CD4-positive, alpha-beta memory T cell (primary cell): ENCODE measurements at regions of chr5 and their contacts with region 1.

Region 1: GRCh38 chr5:160119142-160119904 is at the start of gene PWWP2A:
- DNase-seq: peak; percentile 97 to 100 (median 99)
- H3K4me3 ChIP-seq: peak within 1 kb of the TSS; percentile 69 to 82
- H3K4me3 Mint-ChIP-seq: peak within 1 kb of the TSS; percentile 89 to 98 (median 92)
- H3K27ac ChIP-seq: peak within 1 kb of the TSS; percentile 87
- H3K27ac Mint-ChIP-seq: peak within 1 kb of the TSS; percentile 86 to 98 (median 91)
- H3K4me1 ChIP-seq: peaks cover 14% of the 10 kb centered on the region
- H3K4me1 Mint-ChIP-seq: peaks cover 12 to 23% (median 16%) of the 10 kb centered on the region in 4 donors
- H3K27me3 ChIP-seq: no peaks in the 10 kb centered on the region
- H3K27me3 Mint-ChIP-seq: peaks cover 0 to 4% of the 10 kb centered on the region in 2 donors
- total RNA-seq, gene PWWP2A: 38.7 to 40.6 TPM

Region 2: GRCh38 chr5:159262859-159263567 is 856.3 kb before region 1 on chr5 and contains the start of gene UBLCP1:
- CTCF ChIA-PET with region 1: no interaction called
- POLR2A ChIA-PET with region 1: no interaction called
- intact Hi-C with region 1: loop called (anchors 5 kb)
- DNase-seq: peak; percentile 82 to 87 (median 86)
- H3K4me3 ChIP-seq: peak within 1 kb of the TSS; percentile 67 to 75
- H3K4me3 Mint-ChIP-seq: peak within 1 kb of the TSS; percentile 98 to 99 (median 98)
- H3K27ac ChIP-seq: peak within 1 kb of the TSS; percentile 89
- H3K27ac Mint-ChIP-seq: peak within 1 kb of the TSS; percentile 96 to 100 (median 99)
- H3K4me1 ChIP-seq: peaks cover 27% of the 10 kb centered on the region
- H3K4me1 Mint-ChIP-seq: peaks cover 34 to 66% (median 46%) of the 10 kb centered on the region in 4 donors
- H3K27me3 ChIP-seq: no peaks in the 10 kb centered on the region
- H3K27me3 Mint-ChIP-seq: no peaks in the 10 kb centered on the region
- total RNA-seq, gene UBLCP1: 31.6 to 33.4 TPM

Region 3: GRCh38 chr5:159341914-159342313 is 777.4 kb before region 1 on chr5:
- CTCF ChIA-PET with region 1: no interaction called
- POLR2A ChIA-PET with region 1: interaction called, 3 read pairs
- intact Hi-C with region 1: loop called (anchors 5 kb)
- DNase-seq: peak; percentile 74 to 92 (median 79)
- H3K4me3 ChIP-seq: no peak overlapping the region
- H3K4me3 Mint-ChIP-seq: peak overlapping the region in 7 of 8 donors; percentile 28 to 88 (median 47)
- H3K27ac ChIP-seq: no peak overlapping the region
- H3K27ac Mint-ChIP-seq: peak overlapping the region; percentile 79 to 98 (median 87)
- H3K4me1 ChIP-seq: peaks cover 66% of the 10 kb centered on the region
- H3K4me1 Mint-ChIP-seq: peaks cover 54 to 89% (median 67%) of the 10 kb centered on the region in 4 donors
- H3K27me3 ChIP-seq: no peaks in the 10 kb centered on the region
- H3K27me3 Mint-ChIP-seq: no peaks in the 10 kb centered on the region

Region 4: GRCh38 chr5:160008877-160009590 is 110.3 kb before region 1 on chr5 and contains the start of gene TTC1:
- CTCF ChIA-PET with region 1: interaction called, 3 read pairs
- POLR2A ChIA-PET with region 1: interaction called, 8 read pairs
- intact Hi-C with region 1: loop called (anchors 1 kb)
- DNase-seq: peak; percentile 89 to 96 (median 94)
- H3K4me3 ChIP-seq: peak within 1 kb of the TSS; percentile 85 to 96
- H3K4me3 Mint-ChIP-seq: peak within 1 kb of the TSS; percentile 94 to 100 (median 96)
- H3K27ac ChIP-seq: peak within 1 kb of the TSS; percentile 76
- H3K27ac Mint-ChIP-seq: peak within 1 kb of the TSS; percentile 88 to 99 (median 98)
- H3K4me1 ChIP-seq: peaks cover 30% of the 10 kb centered on the region
- H3K4me1 Mint-ChIP-seq: peaks cover 24 to 35% (median 29%) of the 10 kb centered on the region in 4 donors
- H3K27me3 ChIP-seq: no peaks in the 10 kb centered on the region
- H3K27me3 Mint-ChIP-seq: no peaks in the 10 kb centered on the region
- total RNA-seq, gene TTC1: 47.5 to 47.9 TPM

Region 5: GRCh38 chr5:160064995-160065630 is 54.2 kb before region 1 on chr5:
- CTCF ChIA-PET with region 1: no interaction called
- POLR2A ChIA-PET with region 1: no interaction called
- intact Hi-C with region 1: no loop called
- DNase-seq: no peak
- H3K4me3 ChIP-seq: no peak overlapping the region
- H3K4me3 Mint-ChIP-seq: no peak overlapping the region
- H3K27ac ChIP-seq: no peak overlapping the region
- H3K27ac Mint-ChIP-seq: peak overlapping the region in 1 of 7 donors; percentile 38
- H3K4me1 ChIP-seq: no peaks in the 10 kb centered on the region
- H3K4me1 Mint-ChIP-seq: peaks cover 0 to 6% (median 0%) of the 10 kb centered on the region in 4 donors
- H3K27me3 ChIP-seq: no peaks in the 10 kb centered on the region
- H3K27me3 Mint-ChIP-seq: no peaks in the 10 kb centered on the region

Region 6: DNA sequence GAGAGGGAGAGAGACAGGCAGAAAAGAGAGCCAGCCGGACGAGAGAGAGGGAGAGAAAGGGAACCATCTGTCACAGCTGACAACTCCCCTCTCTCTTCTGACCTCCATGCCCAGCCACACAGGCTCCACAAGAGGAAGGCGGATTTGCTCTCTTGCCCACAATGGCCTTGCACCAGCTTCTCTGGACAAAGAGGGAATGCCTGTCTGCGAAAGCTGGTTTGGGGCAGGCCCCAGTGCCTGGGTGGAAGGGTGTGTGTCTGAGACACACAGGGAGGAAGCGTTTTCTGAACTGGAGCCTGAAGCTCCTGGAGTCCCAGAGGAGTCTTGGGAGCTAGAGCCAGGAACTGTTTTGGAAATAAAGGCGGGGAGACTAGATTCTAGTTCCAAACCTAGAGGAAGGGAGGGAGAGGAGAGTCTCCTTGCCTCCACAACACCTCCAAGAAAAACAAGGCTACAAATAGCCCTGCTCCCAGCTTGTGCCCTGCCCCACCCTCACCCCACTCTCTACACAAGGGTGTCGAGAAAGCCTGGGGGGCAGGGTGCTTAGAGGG is 238.6 kb after region 1 on chr5:
- CTCF ChIA-PET with region 1: no interaction called
- POLR2A ChIA-PET with region 1: no interaction called
- intact Hi-C with region 1: no loop called
- DNase-seq: no peak
- H3K4me3 ChIP-seq: no peak overlapping the region
- H3K4me3 Mint-ChIP-seq: no peak overlapping the region
- H3K27ac ChIP-seq: no peak overlapping the region
- H3K27ac Mint-ChIP-seq: no peak overlapping the region
- H3K4me1 ChIP-seq: no peaks in the 10 kb centered on the region
- H3K4me1 Mint-ChIP-seq: no peaks in the 10 kb centered on the region
- H3K27me3 ChIP-seq: no peaks in the 10 kb centered on the region
- H3K27me3 Mint-ChIP-seq: peaks cover 0 to 14% of the 10 kb centered on the region in 2 donors